Activated CD8-positive, alpha-beta memory T cell treated with anti-CD3 and anti-CD28 coated beads, Interleukin-2, amount 10 ng/mL, durations not matched to agents 7 days and 5 days (primary cell): ENCODE measurements at regions of chr5 and their contacts with region 1.

Region 1: DNA sequence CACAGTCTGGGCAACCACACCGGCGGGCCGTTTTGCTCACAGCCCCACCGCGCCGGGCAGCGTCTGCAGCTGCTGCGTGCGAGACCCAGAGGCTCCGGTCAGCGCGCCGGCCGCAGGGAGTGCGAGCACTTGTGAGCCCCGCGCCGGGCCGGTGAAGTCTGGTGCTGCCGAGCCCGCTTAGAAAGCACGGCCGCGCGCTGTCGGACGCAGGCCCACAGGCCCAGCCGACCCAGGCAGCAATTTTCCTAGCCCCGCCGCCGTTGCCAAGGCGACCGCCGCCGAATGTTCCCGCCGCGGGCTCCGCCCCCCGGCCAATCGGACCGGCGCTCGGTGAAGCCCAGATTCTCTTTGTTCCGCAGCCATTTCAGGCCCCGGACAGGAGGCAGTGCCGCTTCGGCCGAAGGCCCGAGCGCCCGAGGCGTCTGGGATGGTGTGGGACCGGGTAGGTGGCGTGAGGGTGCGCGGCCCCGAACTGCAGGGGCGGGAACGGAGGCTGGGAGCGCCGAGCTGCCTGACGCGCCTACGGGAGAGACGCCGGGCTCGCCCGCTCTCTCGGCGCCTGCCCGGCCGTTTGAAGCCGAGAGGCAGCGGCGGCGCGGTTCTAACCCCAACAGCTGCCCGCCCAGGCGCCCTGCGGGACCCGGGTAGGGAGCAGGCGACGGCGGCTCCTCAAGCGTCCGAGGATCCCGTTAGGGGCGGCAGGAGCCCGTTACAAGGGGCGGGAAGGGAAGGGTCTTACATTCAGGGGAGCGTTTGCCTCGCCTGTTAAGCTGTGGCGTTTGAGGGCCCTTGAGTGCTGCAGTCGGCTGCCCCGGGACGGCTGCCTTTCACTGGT is at the start of gene TNPO1:
- DNase-seq: peak; percentile 85
- ATAC-seq: peak; percentile 87
- H3K4me3 Mint-ChIP-seq: peak within 1 kb of the TSS; percentile 93
- H3K27ac Mint-ChIP-seq: peak within 1 kb of the TSS; percentile 77
- H3K4me1 Mint-ChIP-seq: peaks cover 21% of the 10 kb centered on the region
- H3K27me3 Mint-ChIP-seq: peaks cover 15% of the 10 kb centered on the region
- total RNA-seq, gene TNPO1: 87.8 to 89.6 TPM

Region 2: DNA sequence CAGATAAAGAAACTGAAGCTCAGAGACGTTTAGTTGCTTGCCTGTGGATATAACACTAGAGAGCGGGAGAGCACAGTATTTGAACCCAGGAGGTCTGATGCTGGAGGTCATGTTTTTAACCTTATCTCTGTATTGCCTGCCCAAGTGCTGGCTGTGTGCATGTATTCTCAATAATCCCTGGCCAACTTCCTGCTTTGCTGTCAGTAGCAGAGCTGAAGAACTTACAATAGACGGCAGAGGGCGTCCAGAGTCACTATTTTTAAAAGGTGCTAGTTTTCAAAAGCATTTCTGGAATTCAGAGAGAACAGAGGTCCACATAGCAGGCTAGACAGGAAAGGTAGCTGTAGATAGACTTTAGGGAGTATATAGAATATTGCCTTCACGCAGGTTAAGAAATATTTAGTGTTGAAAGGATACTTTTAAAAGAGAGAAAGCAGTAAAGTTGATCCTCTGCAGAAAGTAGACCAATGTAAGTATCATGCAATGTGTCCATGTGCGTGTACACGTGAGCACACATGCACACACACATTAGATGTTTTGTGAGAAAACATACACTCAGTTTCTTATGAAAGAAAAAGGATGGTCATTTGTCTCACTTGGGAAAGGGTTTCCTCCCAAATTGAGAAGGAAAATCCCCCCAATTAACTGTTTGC is 450.1 kb before region 1 on chr5:
- CTCF ChIA-PET with region 1: interaction called, 12 read pairs
- DNase-seq: peak; percentile 57
- ATAC-seq: peak; percentile 81
- H3K4me3 Mint-ChIP-seq: no peak overlapping the region
- H3K27ac Mint-ChIP-seq: no peak overlapping the region
- H3K4me1 Mint-ChIP-seq: peaks cover 5% of the 10 kb centered on the region
- H3K27me3 Mint-ChIP-seq: no peaks in the 10 kb centered on the region

Region 3: DNA sequence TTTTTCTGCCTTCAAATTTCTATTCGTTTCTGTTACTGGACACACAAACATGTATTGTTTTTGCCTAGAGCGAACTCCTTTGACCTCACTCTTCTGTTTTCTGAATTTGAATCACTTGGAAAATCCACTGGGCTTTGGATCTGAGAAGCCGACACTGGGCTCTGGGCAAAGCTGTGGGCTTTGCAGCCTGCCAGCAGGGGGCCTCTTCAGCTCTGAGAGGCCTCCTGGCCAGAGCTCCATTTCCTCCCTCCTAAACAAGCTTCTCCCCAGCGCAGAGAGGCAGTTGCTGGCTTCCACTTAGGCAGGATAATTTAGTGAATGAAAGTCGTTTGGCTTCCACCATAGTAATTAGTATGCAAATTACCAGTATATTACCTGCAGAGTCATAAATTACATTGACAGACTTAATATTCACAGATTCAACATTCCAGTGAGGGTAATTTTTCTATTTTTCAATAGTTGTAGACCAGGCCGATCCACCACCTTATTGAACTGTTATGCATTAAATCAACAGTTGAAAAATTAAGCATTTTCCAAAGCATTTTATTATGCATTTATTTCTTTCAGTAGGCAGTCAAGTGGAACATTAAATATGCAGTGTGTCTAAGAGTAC is 205.3 kb before region 1 on chr5:
- CTCF ChIA-PET with region 1: interaction called, 45 read pairs
- DNase-seq: peak; percentile 50
- ATAC-seq: peak; percentile 61
- H3K4me3 Mint-ChIP-seq: no peak overlapping the region
- H3K27ac Mint-ChIP-seq: no peak overlapping the region
- H3K4me1 Mint-ChIP-seq: no peaks in the 10 kb centered on the region
- H3K27me3 Mint-ChIP-seq: peaks cover 13% of the 10 kb centered on the region

Region 4: GRCh38 chr5:72829707-72830106 is 13.2 kb after region 1 on chr5:
- CTCF ChIA-PET with region 1: interaction called, 26 read pairs
- DNase-seq: no peak
- ATAC-seq: no peak
- H3K4me3 Mint-ChIP-seq: no peak overlapping the region
- H3K27ac Mint-ChIP-seq: no peak overlapping the region
- H3K4me1 Mint-ChIP-seq: no peaks in the 10 kb centered on the region
- H3K27me3 Mint-ChIP-seq: peaks cover 2% of the 10 kb centered on the region

Region 5: DNA sequence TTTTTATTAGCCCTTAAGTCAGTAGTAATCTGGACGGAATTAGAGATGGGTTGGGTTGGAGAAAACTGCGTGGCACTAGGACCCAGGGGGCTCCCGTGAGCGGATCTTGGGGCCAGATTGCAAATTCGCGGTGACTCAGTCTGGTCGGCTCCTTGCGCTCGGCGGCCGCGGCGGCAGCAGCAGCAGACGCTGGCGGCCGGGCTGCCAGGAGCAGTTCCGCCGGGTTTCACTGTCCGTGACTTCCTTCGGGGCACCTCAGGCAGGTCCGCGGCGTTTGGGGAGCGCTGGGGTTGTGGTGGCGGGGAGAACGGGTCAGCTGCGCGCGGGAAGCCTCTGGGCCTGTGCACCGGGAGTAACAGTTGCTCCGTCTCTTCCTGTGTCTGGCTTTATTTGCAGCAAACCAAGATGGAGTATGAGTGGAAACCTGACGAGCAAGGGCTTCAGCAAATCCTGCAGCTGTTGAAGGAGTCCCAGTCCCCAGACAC is 31.5 kb after region 1 on chr5:
- CTCF ChIA-PET with region 1: interaction called, 10 read pairs
- DNase-seq: peak; percentile 92
- ATAC-seq: peak; percentile 83
- H3K4me3 Mint-ChIP-seq: peak overlapping the region; percentile 97
- H3K27ac Mint-ChIP-seq: peak overlapping the region; percentile 95
- H3K4me1 Mint-ChIP-seq: peaks cover 41% of the 10 kb centered on the region
- H3K27me3 Mint-ChIP-seq: no peaks in the 10 kb centered on the region

Region 6: DNA sequence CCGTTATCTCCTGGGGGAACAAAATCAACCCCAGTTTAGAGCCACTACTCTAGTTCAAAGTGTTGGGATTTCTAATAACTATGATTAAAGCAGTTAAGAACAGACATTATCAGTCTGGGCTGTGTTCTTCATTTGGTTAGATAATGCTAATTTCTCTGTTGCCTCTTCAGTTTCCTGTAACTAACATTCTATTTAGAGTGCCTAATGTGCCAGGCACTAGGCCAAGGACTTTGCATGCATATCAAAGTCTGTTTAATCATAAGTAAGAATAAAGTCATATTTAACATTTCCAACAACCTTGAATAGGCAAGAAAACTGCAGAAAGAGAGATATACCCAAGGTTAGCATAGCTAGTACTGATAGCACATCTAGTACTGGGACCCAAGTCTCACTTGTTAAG is 68.4 kb after region 1 on chr5:
- CTCF ChIA-PET with region 1: no interaction called
- DNase-seq: no peak
- ATAC-seq: no peak
- H3K4me3 Mint-ChIP-seq: no peak overlapping the region
- H3K27ac Mint-ChIP-seq: no peak overlapping the region
- H3K4me1 Mint-ChIP-seq: peaks cover 8% of the 10 kb centered on the region
- H3K27me3 Mint-ChIP-seq: no peaks in the 10 kb centered on the region